CD8-positive, alpha-beta T cell (primary cell): ENCODE measurements at regions of chr6 and their contacts with region 1.

Region 1: GRCh38 chr6:149140137-149140909 is 177.2 kb upstream of the TAB2 start:
- DNase-seq: peak in 7 of 9 experiments; percentile 24 to 85 (median 62)
- ATAC-seq: peak; percentile 76
- H3K4me3 ChIP-seq: peak overlapping the region in 1 of 2 experiments; percentile 18
- H3K4me3 Mint-ChIP-seq: peak overlapping the region; percentile 71
- H3K27ac ChIP-seq: peak overlapping the region; percentile 65 to 89
- H3K27ac Mint-ChIP-seq: peak overlapping the region; percentile 98
- H3K4me1 ChIP-seq: peaks cover 26% of the 10 kb centered on the region
- H3K4me1 Mint-ChIP-seq: peaks cover 38% of the 10 kb centered on the region
- H3K27me3 ChIP-seq: no peaks in the 10 kb centered on the region
- H3K27me3 Mint-ChIP-seq: no peaks in the 10 kb centered on the region
- CTCF ChIP-seq: no peak

Region 2: DNA sequence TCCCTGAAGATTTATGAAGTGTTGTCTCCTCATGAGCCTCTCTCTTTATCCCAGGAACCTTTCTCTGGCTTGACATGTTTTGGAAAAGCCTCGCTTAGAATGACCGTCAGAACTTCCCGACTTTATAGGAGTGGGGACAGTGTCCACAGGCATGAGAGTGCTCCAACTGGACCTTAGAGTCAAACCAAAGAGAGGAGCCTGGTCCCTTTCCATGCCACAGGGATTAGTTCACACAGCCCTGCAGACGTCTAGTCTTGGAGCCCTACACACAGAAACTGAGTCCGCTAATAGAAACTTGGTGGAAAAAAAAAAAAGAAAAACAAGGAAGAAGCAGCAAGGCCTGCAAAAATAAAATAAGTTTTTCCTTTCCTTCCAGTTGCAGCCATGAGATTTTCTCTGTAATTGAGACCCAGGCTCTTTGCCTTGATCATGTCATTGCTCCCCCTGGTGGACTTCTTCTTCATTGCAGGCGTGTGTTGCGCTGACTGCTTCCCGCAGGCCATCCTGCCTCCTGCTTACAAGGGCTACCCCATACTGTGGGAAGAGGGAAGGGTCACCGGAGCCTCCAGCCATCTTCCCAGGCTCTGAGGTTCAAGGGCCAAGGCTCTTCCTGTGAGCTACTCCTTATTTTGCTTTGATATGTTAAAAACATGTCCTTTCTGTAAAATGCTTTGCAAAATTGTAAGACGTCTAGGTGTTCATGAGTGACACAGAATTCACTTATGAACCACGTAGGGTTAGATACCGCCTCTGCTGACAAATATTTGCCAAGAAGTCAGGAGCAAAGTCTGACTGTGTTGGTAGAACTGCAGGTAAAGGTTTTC is 192.5 kb before region 1 on chr6:
- CTCF ChIA-PET with region 1: no interaction called
- POLR2A ChIA-PET with region 1: no interaction called
- intact Hi-C with region 1: no loop called
- DNase-seq: peak; percentile 56 to 86 (median 84)
- ATAC-seq: peak; percentile 94
- H3K4me3 ChIP-seq: no peak overlapping the region
- H3K4me3 Mint-ChIP-seq: no peak overlapping the region
- H3K27ac ChIP-seq: no peak overlapping the region
- H3K27ac Mint-ChIP-seq: no peak overlapping the region
- H3K4me1 ChIP-seq: no peaks in the 10 kb centered on the region
- H3K4me1 Mint-ChIP-seq: no peaks in the 10 kb centered on the region
- H3K27me3 ChIP-seq: no peaks in the 10 kb centered on the region
- H3K27me3 Mint-ChIP-seq: peaks cover 4% of the 10 kb centered on the region
- CTCF ChIP-seq: peak; percentile 74

Region 3: DNA sequence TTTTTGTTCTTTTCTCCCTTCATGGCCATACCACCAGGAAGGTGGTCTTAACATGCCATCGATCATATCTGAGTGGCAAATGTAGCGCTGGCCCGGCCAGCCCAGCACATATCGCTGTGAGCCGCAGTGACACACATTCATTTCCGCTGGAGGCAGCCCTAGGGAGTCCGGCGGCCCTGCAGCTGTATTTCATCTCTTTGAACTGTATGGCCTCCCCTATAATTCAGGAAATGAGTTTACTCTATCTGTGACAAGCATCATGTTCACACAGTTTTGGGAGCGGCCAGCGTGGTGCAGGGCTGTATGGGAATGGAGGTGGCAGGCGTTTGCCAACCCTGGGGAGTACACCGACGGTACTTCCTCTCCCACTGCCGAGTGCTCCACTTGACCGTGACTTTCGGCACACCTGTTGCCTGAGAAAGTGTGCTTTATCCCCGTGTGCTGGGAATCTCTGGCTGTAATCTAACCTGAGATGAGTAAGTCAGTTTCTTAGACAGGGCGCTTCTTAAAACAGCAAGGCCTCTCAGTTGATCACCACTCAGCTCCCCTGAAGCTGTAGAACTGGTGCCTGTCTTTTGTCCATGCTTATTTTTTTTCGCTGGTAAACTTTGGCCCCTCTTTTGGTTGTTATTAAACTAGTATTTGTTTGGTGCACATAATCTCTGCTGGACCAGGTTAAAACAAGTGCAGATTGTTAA is 79.9 kb before region 1 on chr6:
- CTCF ChIA-PET with region 1: no interaction called
- POLR2A ChIA-PET with region 1: no interaction called
- intact Hi-C with region 1: no loop called
- DNase-seq: peak in 8 of 9 experiments; percentile 31 to 76 (median 55)
- ATAC-seq: peak; percentile 83
- H3K4me3 ChIP-seq: peak overlapping the region; percentile 11 to 24
- H3K4me3 Mint-ChIP-seq: peak overlapping the region; percentile 71
- H3K27ac ChIP-seq: peak overlapping the region in 1 of 2 experiments; percentile 41
- H3K27ac Mint-ChIP-seq: peak overlapping the region; percentile 81
- H3K4me1 ChIP-seq: peaks cover 24% of the 10 kb centered on the region
- H3K4me1 Mint-ChIP-seq: peaks cover 28% of the 10 kb centered on the region
- H3K27me3 ChIP-seq: no peaks in the 10 kb centered on the region
- H3K27me3 Mint-ChIP-seq: no peaks in the 10 kb centered on the region
- CTCF ChIP-seq: no peak

Region 4: GRCh38 chr6:149094156-149094555 is 46.2 kb before region 1 on chr6:
- CTCF ChIA-PET with region 1: no interaction called
- POLR2A ChIA-PET with region 1: interaction called, 3 read pairs
- intact Hi-C with region 1: loop called in 1 of 2 experiments (anchors 5 kb)
- DNase-seq: no peak
- ATAC-seq: no peak
- H3K4me3 ChIP-seq: no peak overlapping the region
- H3K4me3 Mint-ChIP-seq: peak overlapping the region; percentile 57
- H3K27ac ChIP-seq: no peak overlapping the region
- H3K27ac Mint-ChIP-seq: no peak overlapping the region
- H3K4me1 ChIP-seq: peaks cover 33% of the 10 kb centered on the region
- H3K4me1 Mint-ChIP-seq: peaks cover 38% of the 10 kb centered on the region
- H3K27me3 ChIP-seq: no peaks in the 10 kb centered on the region
- H3K27me3 Mint-ChIP-seq: no peaks in the 10 kb centered on the region
- CTCF ChIP-seq: no peak

Region 5: DNA sequence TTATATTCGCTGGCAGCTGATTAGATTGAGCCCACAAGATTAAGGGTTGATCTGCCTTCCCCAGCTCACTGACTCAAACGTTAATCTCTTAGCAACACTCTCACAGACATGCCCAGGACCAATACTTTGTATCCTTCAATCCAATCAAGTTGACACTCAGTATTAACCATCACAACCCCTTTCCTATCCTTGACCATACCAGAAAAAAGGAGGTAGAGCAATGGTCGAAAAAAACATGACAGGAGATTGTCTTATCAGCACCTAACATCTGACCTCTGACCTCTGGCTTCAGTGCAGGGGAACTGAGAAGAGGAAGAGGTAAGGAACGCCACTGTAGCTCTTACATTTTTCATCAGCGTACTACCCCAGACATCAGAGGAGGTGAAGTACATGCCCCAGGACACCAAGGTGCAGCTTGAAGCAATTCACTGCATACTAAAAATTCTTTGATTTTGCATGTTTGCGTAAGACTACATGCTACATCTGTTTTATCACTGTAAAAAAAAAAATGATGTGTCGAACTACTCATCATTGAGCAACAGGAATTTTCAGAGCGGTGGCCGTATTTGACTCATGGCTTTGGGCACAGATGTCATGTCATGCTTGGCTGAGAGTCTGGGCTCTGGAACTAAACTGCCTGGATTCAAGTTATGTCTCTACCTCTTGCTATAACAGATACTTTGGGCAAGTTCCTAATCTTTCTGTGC is 10.8 kb before region 1 on chr6:
- CTCF ChIA-PET with region 1: interaction called, 4 read pairs
- POLR2A ChIA-PET with region 1: interaction called, 6 read pairs
- intact Hi-C with region 1: loop called in 1 of 2 experiments (anchors 2 kb)
- DNase-seq: peak in 1 of 9 experiments; percentile 18
- ATAC-seq: no peak
- H3K4me3 ChIP-seq: no peak overlapping the region
- H3K4me3 Mint-ChIP-seq: no peak overlapping the region
- H3K27ac ChIP-seq: no peak overlapping the region
- H3K27ac Mint-ChIP-seq: peak overlapping the region; percentile 79
- H3K4me1 ChIP-seq: peaks cover 24% of the 10 kb centered on the region
- H3K4me1 Mint-ChIP-seq: peaks cover 51% of the 10 kb centered on the region
- H3K27me3 ChIP-seq: no peaks in the 10 kb centered on the region
- H3K27me3 Mint-ChIP-seq: no peaks in the 10 kb centered on the region
- CTCF ChIP-seq: no peak

Region 6: DNA sequence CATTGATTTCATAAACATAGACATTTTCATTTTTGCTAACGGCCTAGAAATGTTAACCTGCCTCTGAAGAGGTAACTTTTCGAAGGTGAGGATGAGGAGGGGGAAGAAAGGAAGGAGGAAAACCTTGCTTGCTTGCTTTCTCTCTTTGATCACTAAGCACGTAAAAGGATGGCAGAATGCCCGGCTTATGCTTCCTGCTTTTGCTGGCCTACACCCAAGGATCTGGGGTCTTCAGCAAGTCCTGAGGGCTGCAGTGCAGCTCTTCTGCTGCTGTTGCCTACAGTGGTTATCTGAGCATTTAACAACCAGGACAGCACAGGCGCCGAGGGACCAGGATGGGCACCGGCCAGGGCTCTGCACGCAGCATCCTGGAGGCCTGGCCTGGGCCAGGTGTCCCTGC is 26.4 kb after region 1 on chr6:
- CTCF ChIA-PET with region 1: no interaction called
- POLR2A ChIA-PET with region 1: no interaction called
- intact Hi-C with region 1: no loop called
- DNase-seq: peak in 3 of 9 experiments; percentile 20 to 58 (median 26)
- ATAC-seq: no peak
- H3K4me3 ChIP-seq: peak overlapping the region in 1 of 2 experiments; percentile 1
- H3K4me3 Mint-ChIP-seq: peak overlapping the region; percentile 32
- H3K27ac ChIP-seq: peak overlapping the region in 1 of 2 experiments; percentile 8
- H3K27ac Mint-ChIP-seq: peak overlapping the region; percentile 82
- H3K4me1 ChIP-seq: peaks cover 30% of the 10 kb centered on the region
- H3K4me1 Mint-ChIP-seq: peaks cover 45% of the 10 kb centered on the region
- H3K27me3 ChIP-seq: no peaks in the 10 kb centered on the region
- H3K27me3 Mint-ChIP-seq: no peaks in the 10 kb centered on the region
- CTCF ChIP-seq: no peak

Region 7: GRCh38 chr6:149233056-149233715 is 92.9 kb after region 1 on chr6:
- CTCF ChIA-PET with region 1: no interaction called
- POLR2A ChIA-PET with region 1: no interaction called
- intact Hi-C with region 1: loop called in 1 of 2 experiments (anchors 5 kb)
- DNase-seq: peak in 7 of 9 experiments; percentile 26 to 65 (median 47)
- ATAC-seq: peak; percentile 54
- H3K4me3 ChIP-seq: peak overlapping the region in 1 of 2 experiments; percentile 17
- H3K4me3 Mint-ChIP-seq: peak overlapping the region; percentile 38
- H3K27ac ChIP-seq: peak overlapping the region; percentile 31 to 45
- H3K27ac Mint-ChIP-seq: peak overlapping the region; percentile 93
- H3K4me1 ChIP-seq: peaks cover 41% of the 10 kb centered on the region
- H3K4me1 Mint-ChIP-seq: peaks cover 43% of the 10 kb centered on the region
- H3K27me3 ChIP-seq: no peaks in the 10 kb centered on the region
- H3K27me3 Mint-ChIP-seq: no peaks in the 10 kb centered on the region
- CTCF ChIP-seq: no peak

Region 8: DNA sequence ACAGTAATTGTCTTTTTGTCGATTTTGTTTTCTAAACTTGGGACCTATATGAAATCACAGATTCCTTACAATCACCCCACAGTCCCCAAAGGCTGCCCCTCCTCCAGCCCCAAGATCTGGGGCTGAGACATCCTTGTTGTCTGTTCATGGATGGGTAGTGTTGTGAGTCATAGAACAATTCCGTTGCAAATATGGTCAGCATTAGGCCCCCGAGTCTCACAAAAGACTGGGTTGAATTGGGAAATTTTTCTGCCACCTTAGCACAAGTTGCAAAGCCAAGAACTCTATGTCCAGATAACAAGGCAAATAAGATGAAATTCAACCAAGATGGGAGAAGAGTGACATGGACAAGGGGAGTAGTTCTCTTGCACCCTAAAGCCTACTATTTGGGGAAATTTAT is 166.6 kb after region 1 on chr6:
- CTCF ChIA-PET with region 1: no interaction called
- POLR2A ChIA-PET with region 1: no interaction called
- intact Hi-C with region 1: no loop called
- DNase-seq: no peak
- ATAC-seq: no peak
- H3K4me3 ChIP-seq: no peak overlapping the region
- H3K4me3 Mint-ChIP-seq: no peak overlapping the region
- H3K27ac ChIP-seq: no peak overlapping the region
- H3K27ac Mint-ChIP-seq: no peak overlapping the region
- H3K4me1 ChIP-seq: no peaks in the 10 kb centered on the region
- H3K4me1 Mint-ChIP-seq: no peaks in the 10 kb centered on the region
- H3K27me3 ChIP-seq: no peaks in the 10 kb centered on the region
- H3K27me3 Mint-ChIP-seq: no peaks in the 10 kb centered on the region
- CTCF ChIP-seq: no peak